ENCODE measurements at regions of chr1 and their contacts with region 1.

Region 1: DNA sequence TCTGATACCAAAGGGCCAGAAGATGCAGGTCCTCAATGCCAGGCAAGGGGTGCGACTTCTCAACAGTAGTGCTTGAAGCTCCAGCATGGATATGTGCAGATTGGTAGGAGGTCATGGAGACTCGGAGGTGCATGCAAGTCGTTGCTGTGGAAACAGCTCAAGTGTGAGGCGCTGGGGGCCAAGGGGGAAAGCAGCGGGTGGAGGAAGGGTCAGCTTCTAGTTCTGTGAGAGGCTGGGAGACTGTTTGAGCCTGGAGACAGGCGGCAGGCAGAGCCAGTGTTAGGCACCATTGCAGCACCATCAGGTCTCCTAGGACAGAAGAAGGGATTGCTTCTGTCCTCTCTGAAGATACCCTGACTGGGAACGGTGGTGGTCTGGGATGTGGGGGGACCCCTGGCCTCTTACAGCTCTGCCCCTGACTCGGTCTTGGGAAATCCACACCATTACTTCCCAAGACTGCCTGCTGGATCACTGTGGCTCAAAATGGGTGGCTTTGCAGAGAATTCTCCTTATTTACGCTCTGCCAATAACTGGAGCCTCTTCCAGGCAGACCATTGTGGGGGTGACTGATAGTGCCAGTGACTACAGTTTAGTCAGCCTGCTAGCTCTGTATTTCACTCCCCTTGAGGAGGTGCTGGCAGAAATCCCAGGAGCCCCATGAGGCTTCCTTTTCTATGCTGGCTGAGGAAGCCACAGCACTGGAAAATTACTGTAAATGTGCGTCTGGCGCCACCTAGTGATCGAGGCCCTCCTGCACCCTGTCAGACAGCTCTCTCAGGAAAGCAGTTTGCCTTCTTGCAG is 46.3 kb upstream of the VANGL1 start:
- DNase-seq: peak; percentile 88 to 93
- ATAC-seq: peak; percentile 85 to 94 (median 92)
- H3K4me3 ChIP-seq: no peak overlapping the region
- H3K27ac ChIP-seq: peak overlapping the region in 1 of 10 donors; percentile 18
- H3K4me1 ChIP-seq: peaks cover 4 to 34% (median 11%) of the 10 kb centered on the region in 9 donors
- H3K27me3 ChIP-seq: no peaks in the 10 kb centered on the region
- CTCF ChIP-seq: peak; percentile 86 to 96 (median 94)

Region 2: DNA sequence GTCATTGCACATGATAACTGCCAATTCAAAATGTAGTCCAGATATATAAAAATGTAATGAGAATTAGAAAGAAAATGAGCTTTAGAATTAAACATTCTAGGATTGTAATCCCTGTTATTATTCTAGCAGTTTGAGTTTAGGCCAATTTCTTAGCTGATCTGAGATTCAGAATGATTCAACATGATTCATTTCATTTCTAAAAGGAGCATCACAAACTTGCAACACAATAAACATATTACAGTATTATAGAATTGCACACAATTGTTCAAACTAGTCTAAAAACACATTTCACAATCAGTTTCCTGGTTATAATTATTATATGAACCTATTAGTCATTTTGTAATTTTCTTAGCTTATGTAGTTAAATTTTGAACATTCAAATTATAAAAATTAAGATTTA is 609.2 kb before region 1 on chr1:
- intact Hi-C with region 1: loop called in 2 of 10 experiments (anchors 5 to 10 kb)
- DNase-seq: no peak
- ATAC-seq: no peak
- H3K4me3 ChIP-seq: no peak overlapping the region
- H3K27ac ChIP-seq: no peak overlapping the region
- H3K4me1 ChIP-seq: no peaks in the 10 kb centered on the region
- H3K27me3 ChIP-seq: no peaks in the 10 kb centered on the region
- CTCF ChIP-seq: no peak

Region 3: DNA sequence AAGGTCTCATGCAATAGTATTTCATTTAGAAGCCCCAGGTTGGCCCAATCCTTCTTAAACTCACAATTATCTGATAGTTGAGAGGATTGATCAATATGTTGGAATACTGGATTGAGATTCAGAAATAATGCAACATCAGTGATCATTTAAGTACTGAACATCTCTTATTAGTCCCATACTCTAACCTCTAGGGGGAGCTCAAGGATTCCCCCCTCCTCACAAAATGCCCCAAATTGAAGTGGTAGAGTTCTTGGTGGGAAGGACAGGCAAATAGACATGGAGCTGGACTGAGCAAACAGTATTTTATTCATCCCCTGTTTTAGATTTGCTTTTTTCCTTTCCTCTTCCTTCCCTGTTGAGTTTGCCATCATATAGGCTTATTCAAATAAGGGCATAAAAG is 320.3 kb before region 1 on chr1:
- intact Hi-C with region 1: loop called in 1 of 10 experiments (anchors 10 kb)
- DNase-seq: no peak
- ATAC-seq: no peak
- H3K4me3 ChIP-seq: no peak overlapping the region
- H3K27ac ChIP-seq: peak overlapping the region in 4 of 10 donors; percentile 38 to 57 (median 44)
- H3K4me1 ChIP-seq: peaks cover 0 to 13% (median 0%) of the 10 kb centered on the region in 9 donors
- H3K27me3 ChIP-seq: no peaks in the 10 kb centered on the region
- CTCF ChIP-seq: peak; percentile 14 to 59 (median 38)

Region 4: DNA sequence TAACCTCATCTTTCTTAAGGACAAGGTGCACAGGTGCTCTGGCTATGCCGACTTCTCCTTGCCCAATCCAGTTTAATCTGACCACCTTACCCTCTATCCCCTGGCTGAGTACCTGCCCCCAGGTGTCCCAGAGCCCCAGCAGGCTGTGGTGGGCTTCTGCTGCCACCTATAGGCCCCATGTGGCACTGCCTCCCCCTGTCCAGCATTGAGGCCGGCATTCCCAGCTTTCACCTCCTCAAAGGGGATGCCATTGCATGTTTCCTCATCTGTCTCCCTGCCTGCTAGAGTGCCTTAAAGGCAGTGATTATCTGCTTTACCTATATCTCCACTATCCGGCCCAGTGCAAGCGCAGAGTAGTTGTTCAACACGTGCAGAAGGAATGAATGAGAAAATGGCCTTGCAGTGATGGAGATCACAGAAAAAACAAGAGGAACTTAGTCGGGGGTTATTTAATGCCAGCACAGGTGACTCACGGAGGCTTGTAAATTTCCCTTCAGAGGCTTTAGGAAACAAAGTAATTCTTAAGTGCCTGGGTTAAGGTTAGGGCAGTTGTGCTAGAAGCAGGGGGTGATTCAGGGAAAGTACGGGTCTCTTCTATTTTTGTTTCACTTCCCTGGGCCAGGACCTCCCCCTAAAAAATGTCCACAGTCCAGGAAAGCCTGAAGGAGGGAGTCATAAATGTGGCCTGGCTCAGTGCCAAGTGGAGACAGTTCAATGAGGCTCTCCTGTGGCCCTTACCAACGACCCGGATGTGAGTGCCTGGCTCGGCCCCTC is 125.6 kb before region 1 on chr1:
- intact Hi-C with region 1: loop called in 4 of 10 experiments (anchors 10 kb)
- DNase-seq: peak; percentile 22 to 42
- ATAC-seq: peak in 7 of 8 donors; percentile 38 to 67 (median 58)
- H3K4me3 ChIP-seq: no peak overlapping the region
- H3K27ac ChIP-seq: no peak overlapping the region
- H3K4me1 ChIP-seq: peaks cover 0 to 14% (median 0%) of the 10 kb centered on the region in 9 donors
- H3K27me3 ChIP-seq: peaks cover 0 to 4% (median 0%) of the 10 kb centered on the region in 7 donors
- CTCF ChIP-seq: peak; percentile 66 to 89 (median 83)

Region 5: GRCh38 chr1:115545791-115546733 is 49.4 kb before region 1 on chr1:
- intact Hi-C with region 1: loop called in 5 of 10 experiments (anchors 1 to 10 kb)
- DNase-seq: peak in 1 of 2 donors; percentile 36
- ATAC-seq: peak; percentile 61 to 88 (median 85)
- H3K4me3 ChIP-seq: no peak overlapping the region
- H3K27ac ChIP-seq: peak overlapping the region in 4 of 10 donors; percentile 7 to 28 (median 23)
- H3K4me1 ChIP-seq: peaks cover 0 to 19% (median 10%) of the 10 kb centered on the region in 9 donors
- H3K27me3 ChIP-seq: no peaks in the 10 kb centered on the region
- CTCF ChIP-seq: peak; percentile 17 to 65 (median 57)